ENCODE measurements at regions of chr15 and their contacts with region 1.

Region 1: DNA sequence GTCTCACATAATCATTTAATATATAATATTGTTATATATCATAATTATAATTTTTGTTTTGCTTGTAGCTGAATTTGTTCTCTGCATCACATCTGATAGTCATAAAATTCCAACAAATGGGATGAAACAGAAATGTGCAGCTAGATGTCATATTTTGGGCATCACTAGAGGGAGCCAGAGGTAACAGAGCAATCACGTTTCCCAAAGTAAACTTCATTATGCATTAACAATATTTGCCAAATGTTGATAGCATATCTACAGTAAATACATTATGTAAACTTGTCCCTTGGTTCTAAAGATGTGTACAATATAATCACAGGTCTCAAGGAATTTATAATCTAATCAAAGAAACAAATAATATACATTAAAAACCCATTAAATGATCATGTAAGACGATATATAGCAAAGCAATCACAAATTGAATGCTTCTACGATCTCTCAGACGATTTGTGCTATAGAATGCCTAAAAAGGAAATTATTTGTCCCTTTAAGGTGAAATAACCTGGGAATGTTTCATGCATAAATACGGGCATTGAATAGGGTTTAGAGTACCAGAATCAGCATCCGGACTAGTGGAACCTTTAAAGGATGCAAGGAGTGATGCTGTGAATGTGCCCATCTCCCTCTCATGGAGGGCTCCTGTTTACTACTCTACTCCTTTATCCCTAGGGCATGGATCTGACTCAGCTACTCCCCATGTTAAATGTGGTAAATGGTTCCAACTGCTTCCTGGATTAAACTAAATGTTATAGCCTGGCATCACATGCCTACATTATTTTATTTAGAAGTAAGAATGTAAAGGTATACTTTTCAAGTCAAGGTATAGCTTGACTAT is 234.1 kb upstream of the MCTP2 start:
- DNase-seq: peak; percentile 41 to 65
- H3K4me3 ChIP-seq: no peak overlapping the region
- H3K4me3 Mint-ChIP-seq: no peak overlapping the region
- H3K27ac Mint-ChIP-seq: no peak overlapping the region
- H3K4me1 ChIP-seq: peaks cover 19% of the 10 kb centered on the region
- H3K4me1 Mint-ChIP-seq: peaks cover 15% of the 10 kb centered on the region
- H3K27me3 ChIP-seq: no peaks in the 10 kb centered on the region
- H3K27me3 Mint-ChIP-seq: no peaks in the 10 kb centered on the region
- CTCF ChIP-seq: peak; percentile 73 to 85

Region 2: DNA sequence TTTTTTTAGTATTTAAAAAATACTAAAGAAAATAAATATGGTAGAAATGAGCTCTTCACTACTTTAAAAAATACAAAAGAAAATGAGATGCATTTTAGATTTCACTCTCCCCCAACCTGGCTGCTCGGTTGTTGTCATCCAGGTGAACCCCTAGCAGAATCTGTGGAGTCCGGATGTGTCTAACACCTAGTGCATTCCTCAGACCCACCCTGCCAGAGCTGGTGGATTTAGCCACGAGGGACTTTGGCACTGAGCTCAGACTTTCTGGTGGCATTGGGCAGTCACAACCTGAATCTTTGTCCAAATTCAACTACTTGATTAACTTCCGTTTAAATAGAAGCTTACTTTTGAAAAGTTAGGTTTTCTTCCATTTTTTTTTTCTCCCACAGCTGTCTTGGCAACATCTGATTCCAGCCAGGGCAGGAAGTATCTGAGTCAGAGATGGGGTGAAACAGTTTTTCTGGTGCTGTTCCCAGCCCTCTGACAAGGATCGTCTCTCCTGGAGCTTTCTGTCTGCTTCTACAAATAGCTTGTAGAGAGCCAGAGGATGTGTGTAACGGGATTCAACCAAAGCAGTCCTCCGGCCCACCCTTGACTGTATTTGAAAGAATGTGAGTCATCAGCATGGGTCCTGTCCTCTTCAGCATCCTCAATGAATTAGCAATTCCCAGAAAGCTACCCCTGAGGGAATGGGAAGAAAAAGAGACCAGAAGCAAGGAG is 67.8 kb before region 1 on chr15:
- CTCF ChIA-PET with region 1: no interaction called
- POLR2A ChIA-PET with region 1: no interaction called
- intact Hi-C with region 1: no loop called
- DNase-seq: no peak
- H3K4me3 ChIP-seq: no peak overlapping the region
- H3K4me3 Mint-ChIP-seq: no peak overlapping the region
- H3K27ac Mint-ChIP-seq: no peak overlapping the region
- H3K4me1 ChIP-seq: no peaks in the 10 kb centered on the region
- H3K4me1 Mint-ChIP-seq: peaks cover 8% of the 10 kb centered on the region
- H3K27me3 ChIP-seq: no peaks in the 10 kb centered on the region
- H3K27me3 Mint-ChIP-seq: peaks cover 5% of the 10 kb centered on the region
- CTCF ChIP-seq: no peak

Region 3: GRCh38 chr15:93954985-93955748 is 42.1 kb before region 1 on chr15:
- CTCF ChIA-PET with region 1: no interaction called
- POLR2A ChIA-PET with region 1: no interaction called
- intact Hi-C with region 1: loop called (anchors 1 kb)
- DNase-seq: peak; percentile 84 to 85
- H3K4me3 ChIP-seq: no peak overlapping the region
- H3K4me3 Mint-ChIP-seq: peak overlapping the region; percentile 64
- H3K27ac Mint-ChIP-seq: peak overlapping the region; percentile 50
- H3K4me1 ChIP-seq: peaks cover 17% of the 10 kb centered on the region
- H3K4me1 Mint-ChIP-seq: peaks cover 21% of the 10 kb centered on the region
- H3K27me3 ChIP-seq: no peaks in the 10 kb centered on the region
- H3K27me3 Mint-ChIP-seq: no peaks in the 10 kb centered on the region
- CTCF ChIP-seq: no peak

Region 4: GRCh38 chr15:94029495-94029894 is 32.2 kb after region 1 on chr15:
- CTCF ChIA-PET with region 1: interaction called, 4 read pairs
- POLR2A ChIA-PET with region 1: no interaction called
- intact Hi-C with region 1: loop called (anchors 1 kb)
- DNase-seq: peak; percentile 48 to 63
- H3K4me3 ChIP-seq: no peak overlapping the region
- H3K4me3 Mint-ChIP-seq: peak overlapping the region; percentile 6
- H3K27ac Mint-ChIP-seq: no peak overlapping the region
- H3K4me1 ChIP-seq: peaks cover 39% of the 10 kb centered on the region
- H3K4me1 Mint-ChIP-seq: peaks cover 24% of the 10 kb centered on the region
- H3K27me3 ChIP-seq: no peaks in the 10 kb centered on the region
- H3K27me3 Mint-ChIP-seq: no peaks in the 10 kb centered on the region
- CTCF ChIP-seq: no peak

Measured in Caco-2 (cell line).